ENCODE measurements at regions of chr5 and their contacts with region 1.

Region 1: DNA sequence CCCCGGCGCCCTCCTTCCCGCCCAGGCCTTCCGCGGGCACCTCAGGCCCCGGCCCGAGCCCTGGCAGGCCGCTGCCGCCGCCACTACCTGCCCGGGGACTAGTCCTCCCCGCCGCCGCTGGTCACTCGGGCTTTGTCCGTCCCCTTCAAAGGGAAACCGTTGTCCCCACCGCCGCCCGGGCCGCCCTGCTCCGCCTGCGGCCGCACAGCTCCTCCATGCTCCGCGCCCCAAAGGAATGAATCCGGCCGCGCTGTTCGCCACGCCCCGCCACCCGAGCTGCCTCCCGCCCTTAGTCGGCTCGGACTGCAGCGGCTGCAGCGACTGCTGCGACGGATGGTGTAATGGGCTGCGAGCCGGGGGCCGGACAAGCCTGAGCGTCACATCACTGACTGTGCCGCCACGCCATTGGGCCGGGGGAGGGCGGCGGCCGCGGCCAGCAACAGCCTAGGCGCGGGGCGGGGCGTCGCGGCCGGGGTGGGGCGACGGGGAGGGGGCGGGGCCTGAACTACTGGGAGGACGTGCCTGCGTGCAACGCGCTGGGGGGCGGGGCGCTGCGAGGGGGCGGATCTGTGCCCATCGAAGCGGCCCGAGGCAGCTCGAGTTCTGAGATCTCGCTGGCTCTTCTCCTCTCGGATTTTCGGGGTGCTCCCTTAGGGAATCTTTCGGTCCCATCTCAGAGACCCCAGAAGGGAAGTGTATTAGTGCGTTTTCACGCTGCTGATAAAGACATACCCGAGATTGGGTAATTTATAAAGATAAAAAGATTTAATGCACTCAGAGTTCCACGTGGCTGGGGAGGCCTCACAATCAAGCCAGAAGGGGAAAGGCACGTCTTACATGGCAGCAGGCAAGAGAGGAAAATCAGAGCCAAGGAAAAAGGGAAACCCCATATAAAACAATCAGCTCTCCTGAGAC is at the start of gene FEM1C:
- DNase-seq: peak; percentile 98
- H3K4me3 Mint-ChIP-seq: peak within 1 kb of the TSS; percentile 95
- H3K27ac Mint-ChIP-seq: peak within 1 kb of the TSS; percentile 99
- H3K4me1 Mint-ChIP-seq: peaks cover 40% of the 10 kb centered on the region
- H3K27me3 Mint-ChIP-seq: no peaks in the 10 kb centered on the region
- total RNA-seq, gene FEM1C: 9.7 to 10.0 TPM

Region 2: GRCh38 chr5:115169487-115170133 is 375.1 kb before region 1 on chr5 and contains the start of gene TRIM36:
- CTCF ChIA-PET with region 1: no interaction called
- intact Hi-C with region 1: loop called (anchors 1 kb)
- DNase-seq: peak; percentile 93
- H3K4me3 Mint-ChIP-seq: peak within 1 kb of the TSS; percentile 82
- H3K27ac Mint-ChIP-seq: no peak within 1 kb of the TSS
- H3K4me1 Mint-ChIP-seq: peaks cover 12% of the 10 kb centered on the region
- H3K27me3 Mint-ChIP-seq: peaks cover 66% of the 10 kb centered on the region
- total RNA-seq, gene TRIM36: 0.17 TPM in 1 of 2 experiments, not detected in the other

Region 3: GRCh38 chr5:115296124-115297022 is 248.3 kb before region 1 on chr5 and contains the start of gene CCDC112:
- CTCF ChIA-PET with region 1: no interaction called
- intact Hi-C with region 1: loop called (anchors 1 kb)
- DNase-seq: peak; percentile 85
- H3K4me3 Mint-ChIP-seq: peak within 1 kb of the TSS; percentile 80
- H3K27ac Mint-ChIP-seq: no peak within 1 kb of the TSS
- H3K4me1 Mint-ChIP-seq: peaks cover 4% of the 10 kb centered on the region
- H3K27me3 Mint-ChIP-seq: peaks cover 3% of the 10 kb centered on the region
- total RNA-seq, gene CCDC112: 1.9 to 2.1 TPM

Region 4: GRCh38 chr5:115487756-115488155 is 56.9 kb before region 1 on chr5:
- CTCF ChIA-PET with region 1: interaction called, 3 read pairs
- intact Hi-C with region 1: loop called (anchors 1 kb)
- DNase-seq: peak; percentile 53
- H3K4me3 Mint-ChIP-seq: no peak overlapping the region
- H3K27ac Mint-ChIP-seq: peak overlapping the region; percentile 64
- H3K4me1 Mint-ChIP-seq: peaks cover 44% of the 10 kb centered on the region
- H3K27me3 Mint-ChIP-seq: peaks cover 8% of the 10 kb centered on the region

Region 5: GRCh38 chr5:115579747-115580173 is 35.1 kb after region 1 on chr5:
- CTCF ChIA-PET with region 1: interaction called, 6 read pairs
- intact Hi-C with region 1: loop called (anchors 1 kb)
- DNase-seq: no peak
- H3K4me3 Mint-ChIP-seq: no peak overlapping the region
- H3K27ac Mint-ChIP-seq: no peak overlapping the region
- H3K4me1 Mint-ChIP-seq: no peaks in the 10 kb centered on the region
- H3K27me3 Mint-ChIP-seq: no peaks in the 10 kb centered on the region

Region 6: GRCh38 chr5:115625579-115626444 is 81.1 kb after region 1 on chr5 and contains the start of gene TMED7:
- CTCF ChIA-PET with region 1: no interaction called
- intact Hi-C with region 1: loop called (anchors 1 kb)
- DNase-seq: peak; percentile 100
- H3K4me3 Mint-ChIP-seq: no peak within 1 kb of the TSS
- H3K27ac Mint-ChIP-seq: peak within 1 kb of the TSS; percentile 89
- H3K4me1 Mint-ChIP-seq: peaks cover 21% of the 10 kb centered on the region
- H3K27me3 Mint-ChIP-seq: no peaks in the 10 kb centered on the region
- total RNA-seq, gene TMED7: 34.6 to 35.4 TPM

Measured in activated naive CD4-positive, alpha-beta T cell treated with anti-CD3 and anti-CD28 coated beads for 36 hours (primary cell).